Activated CD4-positive, alpha-beta memory T cell treated with anti-CD3 and anti-CD28 coated beads for 36 hours (primary cell): ENCODE measurements at regions of chr3 and their contacts with region 1.

Region 1: GRCh38 chr3:187319699-187320302 is 28.3 kb upstream of the MASP1 start:
- DNase-seq: peak; percentile 78
- H3K4me3 Mint-ChIP-seq: no peak overlapping the region
- H3K27ac Mint-ChIP-seq: no peak overlapping the region
- H3K4me1 Mint-ChIP-seq: peaks cover 9% of the 10 kb centered on the region
- H3K27me3 Mint-ChIP-seq: peaks cover 20% of the 10 kb centered on the region

Region 2: DNA sequence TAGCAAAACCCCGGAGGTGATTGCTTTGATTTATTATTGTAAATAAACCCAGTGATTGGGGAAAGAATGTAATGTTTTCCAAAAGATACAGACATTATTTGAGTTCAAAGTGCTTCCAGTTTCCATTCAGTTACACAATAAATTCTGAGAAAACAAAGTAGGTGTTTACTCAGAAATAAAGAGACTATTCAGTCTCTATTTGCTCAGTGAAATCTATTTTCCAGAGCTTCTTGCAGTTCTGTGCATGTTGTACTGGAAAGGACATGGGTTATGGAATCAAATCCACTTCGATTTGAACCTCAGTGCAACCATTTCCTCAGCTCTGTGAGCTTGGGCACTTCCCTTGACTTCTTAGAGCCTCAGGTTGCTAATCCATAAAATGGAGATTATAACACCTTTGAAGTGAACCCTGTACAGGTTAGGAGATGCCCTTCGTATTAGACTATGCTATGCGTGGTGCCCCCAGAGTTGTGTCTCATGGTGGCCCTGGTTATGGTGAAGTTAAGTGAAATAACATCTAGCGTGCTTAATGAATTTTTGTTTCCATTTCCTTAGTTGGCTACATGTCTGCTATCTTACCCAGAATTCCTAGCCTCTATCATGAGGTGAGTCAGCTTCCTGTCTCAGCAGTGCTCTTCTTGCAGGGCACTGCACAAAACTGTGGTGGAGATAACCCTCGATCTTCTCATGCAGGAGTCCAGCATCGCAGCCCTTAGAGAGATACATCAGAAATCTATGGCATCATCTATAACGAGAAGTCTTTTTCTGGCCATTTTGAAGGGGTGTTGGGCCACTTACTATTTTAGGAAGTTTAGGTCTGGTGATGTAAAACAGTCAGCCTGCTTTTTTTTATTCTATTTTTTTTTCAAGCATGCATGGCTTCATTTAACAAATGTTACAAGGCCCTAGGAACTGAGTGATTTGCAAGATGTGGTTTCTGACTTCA is 278.2 kb before region 1 on chr3:
- CTCF ChIA-PET with region 1: no interaction called
- POLR2A ChIA-PET with region 1: no interaction called
- intact Hi-C with region 1: no loop called
- DNase-seq: peak; percentile 70
- H3K4me3 Mint-ChIP-seq: peak overlapping the region; percentile 47
- H3K27ac Mint-ChIP-seq: peak overlapping the region; percentile 92
- H3K4me1 Mint-ChIP-seq: peaks cover 82% of the 10 kb centered on the region
- H3K27me3 Mint-ChIP-seq: no peaks in the 10 kb centered on the region

Region 3: DNA sequence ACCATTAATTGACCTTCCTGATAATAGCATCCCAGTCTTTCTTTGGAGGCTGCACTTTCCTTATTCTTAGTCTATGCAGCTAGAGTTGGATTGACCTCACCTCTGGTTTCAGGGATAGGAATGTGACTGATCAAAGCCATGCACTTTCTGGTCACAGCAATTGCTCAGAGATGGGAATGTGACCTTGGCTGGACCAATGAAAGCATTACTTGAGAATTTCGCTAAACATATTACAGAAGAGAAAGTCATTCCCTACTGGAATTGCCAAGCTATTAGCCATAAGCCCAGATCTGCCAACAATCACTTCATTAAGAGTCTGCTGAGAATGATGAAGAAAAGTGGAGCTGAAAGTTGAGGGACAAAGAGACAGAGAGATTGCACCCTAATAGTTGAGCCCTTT is 89.8 kb before region 1 on chr3:
- CTCF ChIA-PET with region 1: interaction called, 12 read pairs
- POLR2A ChIA-PET with region 1: no interaction called
- intact Hi-C with region 1: no loop called
- DNase-seq: no peak
- H3K4me3 Mint-ChIP-seq: no peak overlapping the region
- H3K27ac Mint-ChIP-seq: no peak overlapping the region
- H3K4me1 Mint-ChIP-seq: no peaks in the 10 kb centered on the region
- H3K27me3 Mint-ChIP-seq: peaks cover 5% of the 10 kb centered on the region

Region 4: DNA sequence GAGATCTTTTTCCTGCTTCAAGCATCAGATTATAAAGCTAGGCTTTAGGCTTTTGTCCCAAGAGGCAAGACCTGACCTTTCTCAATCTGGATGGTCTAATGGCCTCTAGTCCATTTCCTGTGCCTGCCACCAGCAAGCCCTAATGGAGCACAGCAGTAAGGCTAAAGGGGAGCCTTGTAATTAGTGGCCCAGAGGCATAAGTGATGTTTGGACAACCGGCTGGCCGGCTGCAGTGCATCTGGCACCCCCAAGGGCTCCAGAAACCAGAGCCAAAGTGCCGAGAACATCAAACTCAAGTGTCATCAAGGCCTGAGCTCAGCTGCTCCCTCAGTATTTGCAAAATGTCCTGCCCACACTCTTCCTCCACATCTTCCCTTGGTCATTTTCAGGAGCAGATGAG is 16.5 kb after region 1 on chr3:
- CTCF ChIA-PET with region 1: interaction called, 57 read pairs
- POLR2A ChIA-PET with region 1: no interaction called
- intact Hi-C with region 1: no loop called
- DNase-seq: no peak
- H3K4me3 Mint-ChIP-seq: no peak overlapping the region
- H3K27ac Mint-ChIP-seq: no peak overlapping the region
- H3K4me1 Mint-ChIP-seq: no peaks in the 10 kb centered on the region
- H3K27me3 Mint-ChIP-seq: peaks cover 9% of the 10 kb centered on the region

Region 5: GRCh38 chr3:187481426-187481825 is 161.6 kb after region 1 on chr3:
- CTCF ChIA-PET with region 1: interaction called, 11 read pairs
- POLR2A ChIA-PET with region 1: no interaction called
- intact Hi-C with region 1: no loop called
- DNase-seq: no peak
- H3K4me3 Mint-ChIP-seq: no peak overlapping the region
- H3K27ac Mint-ChIP-seq: no peak overlapping the region
- H3K4me1 Mint-ChIP-seq: no peaks in the 10 kb centered on the region
- H3K27me3 Mint-ChIP-seq: peaks cover 16% of the 10 kb centered on the region

Region 6: DNA sequence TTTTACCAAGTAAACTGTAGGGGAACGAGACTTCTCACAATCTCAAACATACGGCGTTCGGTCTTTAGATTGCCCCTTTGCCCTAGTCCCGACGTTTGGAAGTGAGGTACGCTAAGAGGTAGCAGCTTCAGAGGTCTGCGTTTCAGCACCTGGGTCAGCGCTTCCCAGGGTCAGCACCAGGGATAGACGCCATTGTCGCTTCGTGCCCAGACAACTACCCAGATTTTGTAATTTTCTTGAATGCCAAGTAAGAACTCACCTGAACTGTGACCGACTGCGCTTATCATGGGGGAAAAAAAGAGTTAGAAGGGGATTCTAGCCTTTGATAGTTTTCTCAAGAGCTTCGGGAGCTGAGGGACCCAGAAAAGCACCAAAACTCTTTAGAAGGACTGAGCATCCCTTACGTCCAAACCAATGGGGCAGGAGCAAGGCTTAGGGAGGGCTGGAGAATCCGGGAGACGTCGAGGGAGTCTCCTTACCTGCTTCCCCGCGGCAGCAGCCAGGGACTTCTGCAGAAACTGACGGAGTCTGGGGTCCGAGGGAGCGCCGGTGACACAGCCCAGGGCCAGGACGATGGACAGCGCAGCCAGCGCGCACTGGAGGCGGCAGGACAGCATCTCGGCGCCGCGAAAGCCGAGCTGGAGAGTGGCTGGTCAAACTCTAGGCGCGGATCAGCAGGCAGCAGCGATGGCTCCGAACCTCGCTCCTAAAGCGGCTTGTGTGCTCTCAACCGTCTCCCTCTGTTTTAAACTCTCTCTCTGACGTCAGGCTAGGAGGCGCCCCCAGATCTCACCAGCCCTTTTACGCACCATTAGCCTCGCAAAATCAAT is 350.1 kb after region 1 on chr3 and contains the start of gene SST:
- CTCF ChIA-PET with region 1: interaction called, 515 read pairs
- POLR2A ChIA-PET with region 1: no interaction called
- intact Hi-C with region 1: no loop called
- DNase-seq: peak; percentile 49
- H3K4me3 Mint-ChIP-seq: no peak within 1 kb of the TSS
- H3K27ac Mint-ChIP-seq: no peak within 1 kb of the TSS
- H3K4me1 Mint-ChIP-seq: peaks cover 6% of the 10 kb centered on the region
- H3K27me3 Mint-ChIP-seq: peaks cover 65% of the 10 kb centered on the region
- total RNA-seq, gene SST: not detected

Region 7: GRCh38 chr3:187684880-187685279 is 365.1 kb after region 1 on chr3:
- CTCF ChIA-PET with region 1: interaction called, 515 read pairs
- POLR2A ChIA-PET with region 1: interaction called, 4 read pairs
- intact Hi-C with region 1: no loop called
- DNase-seq: peak; percentile 18
- H3K4me3 Mint-ChIP-seq: no peak overlapping the region
- H3K27ac Mint-ChIP-seq: no peak overlapping the region
- H3K4me1 Mint-ChIP-seq: peaks cover 3% of the 10 kb centered on the region
- H3K27me3 Mint-ChIP-seq: peaks cover 39% of the 10 kb centered on the region

Region 8: GRCh38 chr3:187714404-187714979 is 394.7 kb after region 1 on chr3:
- CTCF ChIA-PET with region 1: interaction called, 142 read pairs
- POLR2A ChIA-PET with region 1: no interaction called
- intact Hi-C with region 1: loop called (anchors 1 kb)
- DNase-seq: peak; percentile 82
- H3K4me3 Mint-ChIP-seq: no peak overlapping the region
- H3K27ac Mint-ChIP-seq: no peak overlapping the region
- H3K4me1 Mint-ChIP-seq: peaks cover 12% of the 10 kb centered on the region
- H3K27me3 Mint-ChIP-seq: no peaks in the 10 kb centered on the region

Region 9: GRCh38 chr3:187858041-187858440 is 538.2 kb after region 1 on chr3:
- CTCF ChIA-PET with region 1: no interaction called
- POLR2A ChIA-PET with region 1: no interaction called
- intact Hi-C with region 1: no loop called
- DNase-seq: no peak
- H3K4me3 Mint-ChIP-seq: no peak overlapping the region
- H3K27ac Mint-ChIP-seq: no peak overlapping the region
- H3K4me1 Mint-ChIP-seq: peaks cover under 1% of the 10 kb centered on the region
- H3K27me3 Mint-ChIP-seq: no peaks in the 10 kb centered on the region